Endothelial cell of umbilical vein (primary cell): ENCODE measurements at regions of chr2 and their contacts with region 1.

Region 1: GRCh38 chr2:28406276-28407096 is 13.8 kb downstream of the FOSL2 start:
- DNase-seq: peak; percentile 52
- H3K4me3 ChIP-seq: no peak overlapping the region
- H3K27ac ChIP-seq: peak overlapping the region; percentile 79
- H3K4me1 ChIP-seq: peaks cover 73% of the 10 kb centered on the region
- H3K27me3 ChIP-seq: no peaks in the 10 kb centered on the region
- CTCF ChIP-seq: peak in 1 of 2 donors; percentile 10
- POLR2A ChIP-seq: no peak

Region 2: GRCh38 chr2:27735263-27735953 is 671.1 kb before region 1 on chr2:
- CTCF ChIA-PET with region 1: no interaction called
- POLR2A ChIA-PET with region 1: interaction called, 4 read pairs
- dilution Hi-C with region 1: loop called (anchors 25 kb)
- intact Hi-C with region 1: no loop called
- DNase-seq: peak; percentile 46
- H3K4me3 ChIP-seq: peak overlapping the region in 2 of 3 experiments; percentile 7 to 20
- H3K27ac ChIP-seq: peak overlapping the region; percentile 35
- H3K4me1 ChIP-seq: peaks cover 31% of the 10 kb centered on the region
- H3K27me3 ChIP-seq: no peaks in the 10 kb centered on the region
- CTCF ChIP-seq: no peak
- POLR2A ChIP-seq: peak; percentile 34

Region 3: GRCh38 chr2:27754138-27754588 is 652.3 kb before region 1 on chr2:
- CTCF ChIA-PET with region 1: interaction called, 10 read pairs
- POLR2A ChIA-PET with region 1: no interaction called
- dilution Hi-C with region 1: loop called (anchors 25 kb)
- intact Hi-C with region 1: no loop called
- DNase-seq: peak; percentile 81
- H3K4me3 ChIP-seq: no peak overlapping the region
- H3K27ac ChIP-seq: no peak overlapping the region
- H3K4me1 ChIP-seq: no peaks in the 10 kb centered on the region
- H3K27me3 ChIP-seq: no peaks in the 10 kb centered on the region
- CTCF ChIP-seq: peak; percentile 94 to 97
- POLR2A ChIP-seq: no peak